Activated T-helper 1 cell treated with anti-CD3 and anti-CD28 coated beads, Interleukin-12 subunit alpha, Interleukin-12 subunit beta, Interleukin-2, Interleukin-4 antibody, amounts not matched to agents 30 ng/mL and 10 ng/mL and 1 ng/mL, durations not matched to agents 14 hours and 24 hours and 36 hours (primary cell): ENCODE measurements at regions of chr1 and their contacts with region 1.

Region 1: GRCh38 chr1:149962123-149962548 is 25.5 kb upstream of the MTMR11 start:
- DNase-seq: peak; percentile 29
- H3K4me3 Mint-ChIP-seq: no peak overlapping the region
- H3K27ac Mint-ChIP-seq: peak overlapping the region; percentile 11
- H3K4me1 Mint-ChIP-seq: peaks cover 21% of the 10 kb centered on the region
- H3K27me3 Mint-ChIP-seq: no peaks in the 10 kb centered on the region

Region 2: DNA sequence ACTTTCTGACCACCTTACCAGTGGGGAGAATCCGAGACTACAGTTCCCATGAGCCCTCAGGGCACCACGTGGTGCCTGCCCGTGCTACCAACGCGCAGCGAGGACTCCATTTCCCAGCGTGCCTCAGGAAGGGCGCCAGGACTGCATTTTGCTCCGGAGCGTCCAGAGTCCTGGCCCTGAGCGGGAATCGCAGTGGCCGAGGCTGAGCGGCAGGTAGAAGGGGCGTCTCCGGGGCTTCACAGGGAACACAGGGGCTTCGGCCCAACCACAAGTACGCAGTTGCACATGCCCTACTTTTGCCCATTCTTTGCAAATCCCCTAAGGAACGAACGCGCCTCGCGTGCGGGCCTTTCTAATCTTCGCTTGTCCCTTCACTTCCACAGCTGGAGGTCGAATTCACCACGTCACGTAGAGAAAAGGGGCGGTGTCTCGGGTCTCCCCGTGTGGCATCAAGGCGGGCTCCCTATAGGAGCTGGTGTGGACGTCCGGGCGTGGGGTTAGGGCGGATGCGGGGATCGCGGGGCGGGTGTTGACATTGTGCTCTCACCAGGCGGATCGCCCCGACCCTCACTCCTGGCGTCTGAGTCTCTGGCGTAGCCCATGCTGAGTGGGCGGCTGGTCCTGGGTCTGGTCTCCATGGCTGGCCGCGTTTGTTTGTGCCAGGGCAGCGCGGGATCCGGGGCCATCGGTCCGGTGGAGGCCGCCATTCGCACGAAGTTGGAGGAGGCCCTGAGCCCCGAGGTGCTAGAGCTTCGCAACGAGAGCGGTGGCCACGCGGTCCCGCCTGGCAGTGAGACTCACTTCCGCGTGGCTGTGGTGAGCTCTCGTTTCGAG is 62.5 kb before region 1 on chr1 and contains the start of gene BOLA1:
- intact Hi-C with region 1: loop called (anchors 10 kb)
- DNase-seq: peak; percentile 77
- H3K4me3 Mint-ChIP-seq: peak within 1 kb of the TSS; percentile 86
- H3K27ac Mint-ChIP-seq: peak within 1 kb of the TSS; percentile 92
- H3K4me1 Mint-ChIP-seq: peaks cover 27% of the 10 kb centered on the region
- H3K27me3 Mint-ChIP-seq: peaks cover 2% of the 10 kb centered on the region
- total RNA-seq, gene BOLA1: 23.9 and 24.3 TPM in 2 replicates

Region 3: DNA sequence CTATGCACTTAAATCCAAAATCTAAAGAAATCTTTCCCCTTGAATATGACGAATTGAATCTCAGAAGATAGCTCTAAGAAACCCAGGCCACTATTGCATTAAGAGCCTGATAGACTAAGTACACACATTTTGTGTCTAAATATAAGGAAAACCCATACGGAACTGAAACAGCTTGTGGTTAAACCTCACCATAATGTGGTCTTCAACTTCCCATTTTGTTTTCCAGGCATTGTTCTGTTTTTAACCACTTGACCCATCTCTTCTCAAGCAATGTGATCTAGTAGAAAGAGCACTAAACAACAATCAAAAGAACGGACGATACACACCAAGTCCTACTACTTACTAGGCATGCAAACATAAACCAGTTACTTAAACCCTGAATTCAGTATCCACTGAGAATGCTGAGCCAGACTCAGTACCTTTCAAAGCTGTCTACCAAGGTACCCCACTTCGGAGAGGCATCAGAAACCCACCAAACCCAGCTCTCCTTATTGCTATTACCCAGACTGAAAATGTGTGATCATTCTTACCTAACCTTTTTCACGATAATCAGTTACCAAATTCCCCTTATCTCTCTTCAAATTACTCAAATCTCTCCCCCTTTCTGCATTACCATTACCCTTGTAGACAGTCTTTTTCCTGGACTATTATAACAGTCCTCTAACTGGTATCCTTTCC is 35.6 kb after region 1 on chr1:
- intact Hi-C with region 1: loop called (anchors 1 kb)
- DNase-seq: no peak
- H3K4me3 Mint-ChIP-seq: peak overlapping the region; percentile 6
- H3K27ac Mint-ChIP-seq: peak overlapping the region; percentile 65
- H3K4me1 Mint-ChIP-seq: peaks cover 52% of the 10 kb centered on the region
- H3K27me3 Mint-ChIP-seq: peaks cover 2% of the 10 kb centered on the region

Region 4: GRCh38 chr1:150021191-150021694 is 59.1 kb after region 1 on chr1:
- intact Hi-C with region 1: no loop called
- DNase-seq: no peak
- H3K4me3 Mint-ChIP-seq: no peak overlapping the region
- H3K27ac Mint-ChIP-seq: no peak overlapping the region
- H3K4me1 Mint-ChIP-seq: peaks cover 4% of the 10 kb centered on the region
- H3K27me3 Mint-ChIP-seq: peaks cover 11% of the 10 kb centered on the region

Region 5: DNA sequence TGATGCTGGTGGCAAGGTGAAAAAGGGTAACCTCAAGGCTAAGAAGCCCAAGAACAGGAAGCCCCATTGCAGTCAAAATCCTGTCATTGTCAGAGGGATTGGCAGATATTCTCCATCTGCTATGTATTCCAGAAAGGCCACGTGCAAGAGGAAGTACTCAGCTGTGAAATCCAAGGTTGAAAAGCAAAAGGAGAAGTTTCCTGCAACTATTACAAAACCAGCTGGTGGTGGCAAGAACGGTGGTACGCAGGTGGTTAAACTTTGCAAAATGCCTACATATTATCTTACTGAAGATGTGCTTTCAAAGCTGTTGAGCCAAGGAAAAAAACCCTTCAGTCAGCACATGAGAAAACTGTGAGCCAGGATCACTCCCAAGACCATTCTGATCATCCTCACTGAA is 91.8 kb after region 1 on chr1:
- intact Hi-C with region 1: loop called (anchors 1 kb)
- DNase-seq: no peak
- H3K4me3 Mint-ChIP-seq: no peak overlapping the region
- H3K27ac Mint-ChIP-seq: no peak overlapping the region
- H3K4me1 Mint-ChIP-seq: peaks cover 12% of the 10 kb centered on the region
- H3K27me3 Mint-ChIP-seq: peaks cover 14% of the 10 kb centered on the region

Region 6: GRCh38 chr1:150067184-150068036 is 105.3 kb after region 1 on chr1 and contains the start of gene VPS45:
- intact Hi-C with region 1: loop called (anchors 1 kb)
- DNase-seq: peak; percentile 83
- H3K4me3 Mint-ChIP-seq: peak within 1 kb of the TSS; percentile 97
- H3K27ac Mint-ChIP-seq: peak within 1 kb of the TSS; percentile 98
- H3K4me1 Mint-ChIP-seq: peaks cover 45% of the 10 kb centered on the region
- H3K27me3 Mint-ChIP-seq: peaks cover 5% of the 10 kb centered on the region
- total RNA-seq, gene VPS45: 25.9 and 30.2 TPM in 2 replicates

Region 7: GRCh38 chr1:150168960-150169601 is 206.9 kb after region 1 on chr1:
- intact Hi-C with region 1: loop called (anchors 2 kb)
- DNase-seq: peak; percentile 28
- H3K4me3 Mint-ChIP-seq: no peak overlapping the region
- H3K27ac Mint-ChIP-seq: no peak overlapping the region
- H3K4me1 Mint-ChIP-seq: no peaks in the 10 kb centered on the region
- H3K27me3 Mint-ChIP-seq: peaks cover 11% of the 10 kb centered on the region

Region 8: DNA sequence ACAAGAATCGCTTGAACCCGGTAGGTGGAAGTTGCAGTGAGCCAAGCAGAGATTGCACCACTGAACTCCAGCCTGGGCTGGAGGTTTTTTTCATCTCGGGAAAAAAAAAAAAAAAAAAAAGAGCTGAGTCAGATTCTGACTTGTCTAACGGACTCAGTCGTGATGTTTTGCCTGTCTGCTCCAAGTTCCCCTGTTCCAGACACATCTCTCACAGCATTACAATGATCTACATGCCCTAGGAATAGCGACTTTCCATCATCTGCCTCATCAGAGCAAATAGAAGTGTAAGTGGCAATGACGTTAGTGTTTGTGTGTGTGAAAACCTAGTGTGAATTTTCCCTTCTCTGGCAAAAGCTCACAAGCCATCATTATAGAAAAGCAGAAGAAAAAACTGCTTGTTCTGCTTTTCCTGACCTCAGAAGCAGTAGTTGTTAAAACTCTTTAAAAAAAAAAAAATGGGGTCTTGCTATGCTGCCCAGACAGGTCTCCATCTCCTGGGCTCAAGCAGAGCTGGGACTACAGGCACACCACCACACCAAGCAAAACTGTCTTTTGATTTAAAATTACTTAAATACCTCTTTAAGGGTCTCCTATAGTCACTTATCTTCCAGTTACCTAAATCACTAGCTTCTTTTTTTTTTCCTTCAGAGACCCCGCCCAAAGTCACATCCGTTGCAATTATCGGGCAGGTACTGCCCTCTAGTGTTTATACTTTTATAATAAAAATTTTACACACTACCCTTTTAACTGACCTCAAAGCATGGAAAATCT is 224.8 kb after region 1 on chr1:
- intact Hi-C with region 1: loop called (anchors 1 kb)
- DNase-seq: no peak
- H3K4me3 Mint-ChIP-seq: peak overlapping the region; percentile 12
- H3K27ac Mint-ChIP-seq: peak overlapping the region; percentile 76
- H3K4me1 Mint-ChIP-seq: peaks cover 14% of the 10 kb centered on the region
- H3K27me3 Mint-ChIP-seq: peaks cover 12% of the 10 kb centered on the region